SK-N-SH (cell line): ENCODE measurements at regions of chr9 and their contacts with region 1.

Region 1: DNA sequence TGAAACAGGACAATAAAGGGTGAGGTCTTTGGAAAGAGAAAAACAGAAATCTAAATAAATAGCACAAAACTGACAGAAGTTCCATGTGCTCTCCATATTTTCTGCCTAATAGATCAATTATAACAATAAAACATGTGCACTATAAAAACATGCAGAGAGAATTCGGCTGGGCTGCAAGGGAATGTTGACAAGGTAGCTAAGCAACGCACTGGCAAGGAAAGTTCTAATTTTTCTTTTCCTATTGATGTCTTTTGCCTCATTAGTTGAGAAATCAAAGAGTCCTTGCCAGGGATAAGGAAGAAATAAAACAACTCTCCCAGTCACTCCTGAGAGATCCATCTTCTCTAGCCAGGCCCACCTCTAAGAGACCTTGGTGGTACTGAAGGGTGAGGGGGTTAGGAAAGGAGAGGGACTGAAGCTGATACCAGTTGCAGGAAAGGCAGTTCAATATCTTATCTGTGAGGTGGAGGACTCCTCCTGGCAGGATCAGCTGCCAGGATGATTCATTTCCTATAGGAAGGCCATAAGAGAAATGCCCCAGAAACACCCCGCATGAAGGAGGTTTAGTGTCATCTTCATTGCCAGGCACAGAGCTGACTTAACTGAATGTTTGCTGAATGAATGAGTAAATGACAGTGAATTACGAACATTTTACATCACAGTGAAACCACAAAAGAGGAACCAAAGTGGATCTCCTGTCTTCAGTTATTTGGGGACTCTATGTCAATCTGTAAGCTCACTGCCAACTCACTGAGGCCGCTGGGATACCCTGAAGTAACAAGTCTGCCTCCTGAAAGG is 63.7 kb upstream of the IFNK start:
- DNase-seq: no peak
- H3K4me3 ChIP-seq: no peak overlapping the region
- H3K27ac ChIP-seq: peak overlapping the region in 1 of 2 experiments; percentile 61; a peak in 2 of 4 replicates
- H3K4me1 ChIP-seq: no peaks in the 10 kb centered on the region
- H3K27me3 ChIP-seq: no peaks in the 10 kb centered on the region
- CTCF ChIP-seq: no peak
- EP300 ChIP-seq: peak in 1 of 2 experiments; percentile 63; a peak in 1 of 4 replicates
- RAD21 ChIP-seq: no peak

Region 2: DNA sequence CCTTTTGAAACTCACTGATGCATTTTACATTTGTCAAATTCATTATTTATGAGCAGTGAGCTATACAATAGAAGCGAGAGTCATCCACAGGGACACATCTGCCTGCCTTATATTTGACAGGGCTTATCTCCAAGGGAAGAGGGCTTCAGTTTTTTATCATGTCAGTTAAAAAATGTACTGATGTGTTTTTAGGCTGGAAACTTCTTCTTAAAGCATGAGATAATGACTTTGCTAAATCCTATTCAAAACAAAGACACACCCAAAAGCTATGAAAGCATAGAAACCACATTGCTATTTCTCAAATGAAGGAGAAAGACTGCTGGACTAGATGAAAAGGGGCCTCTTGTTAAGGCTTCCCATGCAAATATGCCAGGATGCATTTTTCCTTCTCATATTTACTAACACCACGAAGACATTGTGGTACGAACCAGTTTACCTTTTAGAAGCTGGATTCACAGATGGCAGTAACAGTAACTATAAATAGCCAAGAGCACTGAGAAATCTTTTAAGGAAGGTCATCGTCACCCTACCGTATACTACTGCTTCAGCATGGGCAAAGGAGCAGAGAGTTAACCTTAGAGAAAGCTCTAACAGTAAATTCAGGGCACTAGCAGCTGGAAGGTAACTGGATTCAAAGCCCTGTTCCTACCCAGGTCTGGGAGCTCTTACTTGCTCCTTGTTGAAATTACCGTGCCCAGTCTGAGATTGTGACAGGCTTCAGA is 22.6 kb before region 1 on chr9:
- CTCF ChIA-PET with region 1: no interaction called
- POLR2A ChIA-PET with region 1: no interaction called
- DNase-seq: no peak
- H3K4me3 ChIP-seq: no peak overlapping the region
- H3K27ac ChIP-seq: no peak overlapping the region
- H3K4me1 ChIP-seq: no peaks in the 10 kb centered on the region
- H3K27me3 ChIP-seq: no peaks in the 10 kb centered on the region
- CTCF ChIP-seq: no peak
- EP300 ChIP-seq: no peak
- RAD21 ChIP-seq: no peak

Region 3: GRCh38 chr9:27473111-27473529 is 12.7 kb after region 1 on chr9:
- CTCF ChIA-PET with region 1: interaction called, 10 read pairs
- POLR2A ChIA-PET with region 1: no interaction called
- DNase-seq: peak; percentile 16
- H3K4me3 ChIP-seq: no peak overlapping the region
- H3K27ac ChIP-seq: peak overlapping the region; percentile 41 to 69
- H3K4me1 ChIP-seq: peaks cover 0 to 10% of the 10 kb centered on the region in 2 experiments; a peak in 2 of 4 replicates
- H3K27me3 ChIP-seq: no peaks in the 10 kb centered on the region
- CTCF ChIP-seq: no peak
- EP300 ChIP-seq: no peak
- RAD21 ChIP-seq: no peak

Region 4: GRCh38 chr9:27743490-27743889 is 283.1 kb after region 1 on chr9:
- CTCF ChIA-PET with region 1: no interaction called
- POLR2A ChIA-PET with region 1: no interaction called
- DNase-seq: peak; percentile 20
- H3K4me3 ChIP-seq: no peak overlapping the region
- H3K27ac ChIP-seq: peak overlapping the region in 1 of 2 experiments; percentile 69; a peak in 2 of 4 replicates
- H3K4me1 ChIP-seq: peaks cover 0 to 9% of the 10 kb centered on the region in 2 experiments; a peak in 2 of 4 replicates
- H3K27me3 ChIP-seq: no peaks in the 10 kb centered on the region
- CTCF ChIP-seq: no peak
- EP300 ChIP-seq: peak in 1 of 2 experiments; percentile 70; a peak in 1 of 4 replicates
- RAD21 ChIP-seq: no peak; the same call in 1 of the 2 replicates